ENCODE measurements at regions of chr9 and their contacts with region 1.

Region 1: DNA sequence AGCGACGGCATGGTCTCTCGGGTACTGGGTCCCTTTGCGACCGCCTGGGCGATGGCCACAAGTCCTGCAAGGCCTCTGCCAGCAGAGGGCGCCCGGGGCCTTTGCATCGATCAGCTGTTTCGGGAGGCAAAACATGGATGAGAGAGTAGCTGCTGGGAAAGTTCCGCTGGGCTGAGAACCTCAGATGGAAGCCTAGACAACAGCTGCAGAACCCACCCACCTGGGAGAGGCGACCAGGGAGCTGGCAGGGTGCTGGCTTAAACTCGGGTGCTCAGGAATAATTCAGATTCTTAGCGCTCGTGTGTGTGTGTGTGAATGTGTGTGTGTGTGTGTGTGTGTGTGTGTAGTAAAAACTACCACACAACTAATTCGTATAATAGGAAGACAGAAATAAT is 50.0 kb downstream of the TRIM32 start:
- DNase-seq: peak; percentile 79 to 92
- ATAC-seq: peak; percentile 87 to 98
- H3K4me3 ChIP-seq: no peak overlapping the region
- H3K27ac ChIP-seq: no peak overlapping the region
- H3K4me1 ChIP-seq: no peaks in the 10 kb centered on the region
- CTCF ChIP-seq: peak; percentile 91
- EP300 ChIP-seq: no peak
- POLR2A ChIP-seq: no peak
- RAD21 ChIP-seq: peak; percentile 93

Region 2: GRCh38 chr9:116494815-116495634 is 242.1 kb before region 1 on chr9:
- CTCF ChIA-PET with region 1: no interaction called
- POLR2A ChIA-PET with region 1: no interaction called
- DNase-seq: peak in 1 of 2 experiments; percentile 32
- ATAC-seq: peak in 1 of 2 experiments; percentile 42; a peak in 2 of 6 replicates
- H3K4me3 ChIP-seq: no peak overlapping the region
- H3K27ac ChIP-seq: peak overlapping the region; percentile 35 to 85; a peak in 4 of 6 replicates
- H3K4me1 ChIP-seq: peaks cover 50% of the 10 kb centered on the region
- CTCF ChIP-seq: peak; percentile 60
- EP300 ChIP-seq: no peak
- POLR2A ChIP-seq: no peak
- RAD21 ChIP-seq: peak; percentile 39 to 49; a peak in 4 of 5 replicates

Region 3: DNA sequence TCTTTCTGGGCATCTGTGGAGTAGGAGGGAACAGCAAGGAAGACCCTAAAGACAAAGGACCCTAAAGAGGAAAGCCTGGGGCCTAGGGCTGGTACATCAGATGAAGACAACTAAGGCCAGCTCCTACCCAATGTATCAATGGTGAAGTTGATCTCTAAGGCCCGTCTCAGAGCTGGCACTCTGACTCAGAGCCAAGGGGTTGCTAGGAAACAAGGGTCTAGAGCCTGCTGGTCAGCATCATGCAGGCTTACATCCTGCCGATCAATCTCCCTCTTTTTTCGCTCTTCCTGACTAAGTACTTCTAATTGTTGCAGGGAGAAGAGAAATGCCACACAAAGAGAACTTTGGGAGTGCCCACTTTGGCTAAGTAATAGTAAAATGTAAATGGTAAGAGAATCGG is 23.9 kb before region 1 on chr9:
- CTCF ChIA-PET with region 1: interaction called, 12 read pairs
- POLR2A ChIA-PET with region 1: no interaction called
- DNase-seq: no peak
- ATAC-seq: no peak
- H3K4me3 ChIP-seq: no peak overlapping the region
- H3K27ac ChIP-seq: no peak overlapping the region
- H3K4me1 ChIP-seq: no peaks in the 10 kb centered on the region
- CTCF ChIP-seq: no peak
- EP300 ChIP-seq: no peak
- POLR2A ChIP-seq: no peak
- RAD21 ChIP-seq: no peak

Region 4: DNA sequence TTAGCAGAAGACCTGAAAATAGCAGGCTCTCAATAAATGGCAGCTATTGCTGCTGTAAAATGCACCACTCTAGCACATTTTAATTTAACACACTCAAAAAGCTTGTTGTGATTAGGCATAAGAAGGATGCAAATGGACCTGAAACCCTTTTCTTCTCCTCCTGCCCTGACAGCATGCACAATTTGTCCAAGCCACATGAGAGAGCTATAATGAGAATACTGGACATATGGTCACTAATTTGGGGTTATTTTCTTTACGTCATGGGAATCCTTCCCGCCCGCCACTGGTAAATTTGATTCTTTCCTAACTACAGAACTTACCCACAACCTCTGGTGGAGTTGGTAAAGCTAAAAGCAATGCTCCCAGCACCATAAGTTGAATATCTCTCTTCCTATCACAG is 12.0 kb after region 1 on chr9:
- CTCF ChIA-PET with region 1: interaction called, 24 read pairs
- POLR2A ChIA-PET with region 1: no interaction called
- DNase-seq: no peak
- ATAC-seq: no peak
- H3K4me3 ChIP-seq: no peak overlapping the region
- H3K27ac ChIP-seq: no peak overlapping the region
- H3K4me1 ChIP-seq: no peaks in the 10 kb centered on the region
- CTCF ChIP-seq: no peak
- EP300 ChIP-seq: no peak
- POLR2A ChIP-seq: no peak
- RAD21 ChIP-seq: no peak

Region 5: GRCh38 chr9:116795821-116796220 is 58.7 kb after region 1 on chr9:
- CTCF ChIA-PET with region 1: interaction called, 16 read pairs
- POLR2A ChIA-PET with region 1: no interaction called
- DNase-seq: no peak
- ATAC-seq: no peak
- H3K4me3 ChIP-seq: no peak overlapping the region
- H3K27ac ChIP-seq: no peak overlapping the region
- H3K4me1 ChIP-seq: no peaks in the 10 kb centered on the region
- CTCF ChIP-seq: no peak
- EP300 ChIP-seq: no peak
- POLR2A ChIP-seq: no peak
- RAD21 ChIP-seq: no peak

Region 6: GRCh38 chr9:116860509-116861120 is 123.5 kb after region 1 on chr9:
- CTCF ChIA-PET with region 1: interaction called, 193 read pairs
- POLR2A ChIA-PET with region 1: no interaction called
- DNase-seq: peak; percentile 62 to 76
- ATAC-seq: peak; percentile 92 to 97
- H3K4me3 ChIP-seq: no peak overlapping the region
- H3K27ac ChIP-seq: no peak overlapping the region
- H3K4me1 ChIP-seq: no peaks in the 10 kb centered on the region
- CTCF ChIP-seq: peak; percentile 67
- EP300 ChIP-seq: no peak
- POLR2A ChIP-seq: no peak
- RAD21 ChIP-seq: peak; percentile 52 to 57